ENCODE measurements at regions of chr5 and their contacts with region 1.

Region 1: GRCh38 chr5:120803282-120803681 is 339.2 kb downstream of the PRR16 start:
- DNase-seq: peak; percentile 33
- H3K4me3 Mint-ChIP-seq: no peak overlapping the region
- H3K27ac Mint-ChIP-seq: no peak overlapping the region
- H3K4me1 Mint-ChIP-seq: peaks cover 15% of the 10 kb centered on the region
- H3K27me3 Mint-ChIP-seq: no peaks in the 10 kb centered on the region
- CTCF ChIP-seq: peak; percentile 41

Region 2: DNA sequence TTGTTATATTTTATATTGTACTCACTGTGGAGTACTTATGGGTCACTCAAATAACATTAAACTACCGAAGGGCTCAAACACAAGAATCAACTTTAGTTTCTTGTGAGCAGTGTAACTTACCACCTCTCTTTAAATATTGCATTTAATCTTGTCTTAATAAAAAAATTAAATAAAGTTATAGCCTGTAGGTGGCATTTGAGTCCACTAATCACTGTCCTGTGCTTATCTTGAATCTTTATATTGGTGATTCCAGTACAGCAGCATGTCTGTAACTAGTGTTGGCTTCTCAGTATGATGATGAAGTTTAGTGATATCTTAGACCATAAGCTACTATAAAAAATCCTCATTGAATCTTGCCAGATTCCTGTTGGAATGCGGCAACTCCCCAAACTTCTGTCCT is 860.1 kb before region 1 on chr5:
- CTCF ChIA-PET with region 1: interaction called, 7 read pairs
- POLR2A ChIA-PET with region 1: no interaction called
- intact Hi-C with region 1: loop called (anchors 1 kb)
- DNase-seq: peak; percentile 33
- H3K4me3 Mint-ChIP-seq: no peak overlapping the region
- H3K27ac Mint-ChIP-seq: no peak overlapping the region
- H3K4me1 Mint-ChIP-seq: peaks cover 11% of the 10 kb centered on the region
- H3K27me3 Mint-ChIP-seq: no peaks in the 10 kb centered on the region
- CTCF ChIP-seq: peak; percentile 34

Region 3: DNA sequence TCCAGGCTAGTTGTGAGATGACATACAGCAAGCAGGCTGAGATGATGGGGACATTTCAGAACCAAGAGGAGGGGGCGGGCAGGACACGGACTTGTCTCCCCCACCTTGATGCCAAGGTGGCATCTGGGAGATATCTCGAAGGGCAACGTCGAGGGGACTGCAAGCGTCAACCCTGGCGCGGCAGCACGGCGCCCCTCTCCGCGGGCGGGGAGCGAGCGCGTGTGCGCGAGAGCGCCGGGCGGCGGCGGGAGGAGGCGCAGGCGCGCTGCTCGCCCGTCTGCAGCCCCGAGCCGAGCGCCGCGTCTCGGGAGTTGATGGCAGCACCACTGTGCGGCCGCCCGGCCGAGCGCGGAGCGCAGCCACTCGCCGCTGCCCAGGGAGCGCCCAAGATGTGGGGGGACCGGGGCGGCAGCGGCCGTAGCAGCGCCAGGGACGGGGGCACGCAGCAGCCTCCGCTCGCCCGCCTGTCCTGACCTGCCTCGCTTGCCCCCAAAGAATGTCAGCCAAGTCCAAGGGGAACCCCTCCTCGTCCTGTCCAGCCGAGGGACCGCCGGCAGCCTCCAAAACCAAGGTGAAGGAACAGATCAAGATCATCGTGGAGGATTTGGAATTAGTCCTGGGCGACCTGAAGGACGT is 339.2 kb before region 1 on chr5 and contains the start of gene PRR16:
- CTCF ChIA-PET with region 1: interaction called, 5 read pairs
- POLR2A ChIA-PET with region 1: interaction called, 3 read pairs
- intact Hi-C with region 1: loop called (anchors 2 kb)
- DNase-seq: peak; percentile 79
- H3K4me3 Mint-ChIP-seq: peak within 1 kb of the TSS; percentile 85
- H3K27ac Mint-ChIP-seq: peak within 1 kb of the TSS; percentile 6
- H3K4me1 Mint-ChIP-seq: peaks cover 39% of the 10 kb centered on the region
- H3K27me3 Mint-ChIP-seq: no peaks in the 10 kb centered on the region
- CTCF ChIP-seq: no peak
- total RNA-seq, gene PRR16: 11.9 and 18.9 TPM in 2 replicates

Region 4: DNA sequence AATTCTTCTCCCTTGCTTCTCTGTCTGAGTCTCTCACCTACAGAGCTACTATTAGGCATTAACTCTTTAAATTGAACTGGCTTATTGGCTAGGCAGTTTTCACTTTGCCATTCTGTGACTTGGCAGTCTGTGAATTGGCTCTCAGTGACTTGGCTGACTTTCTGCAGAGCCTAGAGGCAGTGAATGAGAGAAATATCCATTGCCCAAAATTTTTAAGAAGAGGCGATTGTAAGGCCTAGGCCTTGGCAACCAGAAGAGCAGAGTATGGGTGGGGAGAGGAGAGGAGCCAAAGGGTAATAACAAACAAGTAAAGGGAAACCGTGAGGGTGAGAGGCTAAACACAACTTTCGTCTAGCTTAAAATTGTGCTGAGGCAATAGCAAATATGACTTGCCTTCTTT is 162.5 kb before region 1 on chr5:
- CTCF ChIA-PET with region 1: no interaction called
- POLR2A ChIA-PET with region 1: no interaction called
- intact Hi-C with region 1: no loop called
- DNase-seq: no peak
- H3K4me3 Mint-ChIP-seq: no peak overlapping the region
- H3K27ac Mint-ChIP-seq: no peak overlapping the region
- H3K4me1 Mint-ChIP-seq: peaks cover 22% of the 10 kb centered on the region
- H3K27me3 Mint-ChIP-seq: no peaks in the 10 kb centered on the region
- CTCF ChIP-seq: no peak

Region 5: DNA sequence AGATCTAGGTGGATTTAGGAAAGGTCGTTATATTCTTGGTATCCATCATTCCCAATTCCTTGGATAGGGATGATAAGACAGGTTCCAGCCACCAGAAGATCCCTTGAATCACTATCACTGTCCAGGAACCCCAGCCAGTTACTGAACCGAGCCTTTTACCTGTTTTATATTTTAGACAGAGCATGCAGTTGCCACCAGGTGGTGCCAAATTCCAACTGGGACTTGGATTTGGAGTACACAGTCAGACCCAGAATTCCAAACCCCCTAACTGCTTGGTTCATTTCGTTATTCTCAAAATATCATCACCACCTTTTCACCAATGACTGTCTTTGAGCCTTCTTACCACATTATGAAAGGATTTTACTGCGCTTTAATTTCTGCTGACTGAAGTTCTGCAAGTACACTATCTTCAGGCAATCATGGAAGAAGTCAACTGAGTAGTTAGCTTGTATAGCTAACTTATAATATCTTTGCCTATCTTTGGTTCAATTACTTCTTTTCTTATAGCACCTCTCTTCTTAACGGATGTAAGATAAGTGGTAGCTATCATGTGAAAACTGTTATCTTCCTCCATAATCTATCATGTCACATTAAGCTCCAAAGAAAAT is 147.3 kb before region 1 on chr5:
- CTCF ChIA-PET with region 1: interaction called, 35 read pairs
- POLR2A ChIA-PET with region 1: no interaction called
- intact Hi-C with region 1: loop called (anchors 2 kb)
- DNase-seq: peak; percentile 71
- H3K4me3 Mint-ChIP-seq: no peak overlapping the region
- H3K27ac Mint-ChIP-seq: no peak overlapping the region
- H3K4me1 Mint-ChIP-seq: no peaks in the 10 kb centered on the region
- H3K27me3 Mint-ChIP-seq: no peaks in the 10 kb centered on the region
- CTCF ChIP-seq: peak; percentile 66

Region 6: GRCh38 chr5:120817044-120817985 is 14.0 kb after region 1 on chr5:
- CTCF ChIA-PET with region 1: interaction called, 18 read pairs
- POLR2A ChIA-PET with region 1: no interaction called
- intact Hi-C with region 1: no loop called
- DNase-seq: peak; percentile 50
- H3K4me3 Mint-ChIP-seq: no peak overlapping the region
- H3K27ac Mint-ChIP-seq: no peak overlapping the region
- H3K4me1 Mint-ChIP-seq: no peaks in the 10 kb centered on the region
- H3K27me3 Mint-ChIP-seq: no peaks in the 10 kb centered on the region
- CTCF ChIP-seq: peak; percentile 72